HEK293 (cell line): ENCODE measurements at regions of chr6 and their contacts with region 1.

Region 1: DNA sequence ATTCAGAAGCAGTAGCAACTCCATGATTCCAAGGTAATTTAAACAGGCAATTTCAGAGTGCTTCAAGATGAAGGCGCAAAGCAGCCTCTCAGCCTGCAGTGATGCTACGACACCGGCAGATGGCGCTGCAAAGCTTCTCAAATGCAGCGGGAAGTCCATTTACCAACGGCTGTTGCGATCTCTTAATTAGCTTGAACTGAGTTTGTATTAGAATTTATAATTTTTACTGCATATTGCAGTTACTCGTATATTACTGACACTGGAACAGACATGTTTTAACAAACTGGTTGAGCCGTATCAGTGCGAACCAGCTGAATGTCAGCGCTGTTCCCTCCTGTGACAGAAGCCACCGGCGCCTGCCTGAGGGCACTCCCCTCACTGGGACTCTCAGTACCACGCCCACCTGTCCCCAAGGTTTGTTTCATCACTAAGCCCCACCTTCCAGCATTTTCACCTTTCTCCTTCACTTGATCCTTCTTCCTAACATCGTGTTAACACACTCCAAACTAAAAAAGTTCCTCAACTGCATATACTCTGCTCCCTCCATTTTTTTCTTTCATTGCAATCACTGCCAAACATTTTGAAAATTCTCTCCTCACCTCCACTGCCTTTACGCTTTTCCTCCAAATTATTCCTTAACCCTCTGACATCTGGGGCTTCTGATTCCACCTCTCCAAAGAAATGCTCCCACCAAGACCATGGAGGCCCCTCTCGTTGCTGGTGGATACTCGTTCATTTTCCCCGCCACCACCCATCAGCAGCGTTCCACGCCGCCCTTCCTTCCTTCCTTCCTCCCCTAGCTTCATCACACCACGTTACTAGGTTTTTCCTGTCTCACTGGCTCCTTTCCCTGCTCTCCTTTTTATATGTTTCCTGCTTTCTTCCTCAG is 14.5 kb downstream of the GNL1 start:
- H3K4me3 ChIP-seq: peak overlapping the region; percentile 34
- H3K27ac ChIP-seq: no peak overlapping the region
- H3K4me1 ChIP-seq: no peaks in the 10 kb centered on the region
- CTCF ChIP-seq: peak; percentile 79

Region 2: GRCh38 chr6:30263734-30264133 is 278.0 kb before region 1 on chr6:
- CTCF ChIA-PET with region 1: no interaction called
- POLR2A ChIA-PET with region 1: no interaction called
- H3K4me3 ChIP-seq: no peak overlapping the region
- H3K27ac ChIP-seq: no peak overlapping the region
- H3K4me1 ChIP-seq: peaks cover 8% of the 10 kb centered on the region; the same call in 1 of the 2 replicates
- CTCF ChIP-seq: no peak

Region 3: DNA sequence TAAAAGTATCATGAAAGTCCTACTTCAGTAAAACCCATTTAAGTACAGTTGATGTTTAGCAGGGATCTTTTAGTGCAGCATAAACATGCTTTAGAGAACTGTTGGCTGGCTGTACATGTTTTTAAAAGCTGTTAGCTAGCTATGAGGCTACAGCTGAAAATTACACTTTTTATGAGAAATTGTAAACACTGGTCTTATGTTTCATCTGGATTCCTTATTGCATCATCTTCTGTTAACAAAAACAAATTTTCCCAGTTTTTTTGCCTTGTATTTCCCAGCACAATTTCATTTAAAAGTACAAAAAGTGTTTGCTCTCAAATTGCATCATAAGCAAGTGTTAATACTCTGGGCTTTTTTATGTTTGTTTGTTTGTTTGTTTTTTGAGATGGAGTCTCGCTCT is 70.8 kb before region 1 on chr6:
- CTCF ChIA-PET with region 1: interaction called, 11 read pairs
- POLR2A ChIA-PET with region 1: no interaction called
- H3K4me3 ChIP-seq: no peak overlapping the region
- H3K27ac ChIP-seq: no peak overlapping the region
- H3K4me1 ChIP-seq: no peaks in the 10 kb centered on the region
- CTCF ChIP-seq: no peak

Region 4: DNA sequence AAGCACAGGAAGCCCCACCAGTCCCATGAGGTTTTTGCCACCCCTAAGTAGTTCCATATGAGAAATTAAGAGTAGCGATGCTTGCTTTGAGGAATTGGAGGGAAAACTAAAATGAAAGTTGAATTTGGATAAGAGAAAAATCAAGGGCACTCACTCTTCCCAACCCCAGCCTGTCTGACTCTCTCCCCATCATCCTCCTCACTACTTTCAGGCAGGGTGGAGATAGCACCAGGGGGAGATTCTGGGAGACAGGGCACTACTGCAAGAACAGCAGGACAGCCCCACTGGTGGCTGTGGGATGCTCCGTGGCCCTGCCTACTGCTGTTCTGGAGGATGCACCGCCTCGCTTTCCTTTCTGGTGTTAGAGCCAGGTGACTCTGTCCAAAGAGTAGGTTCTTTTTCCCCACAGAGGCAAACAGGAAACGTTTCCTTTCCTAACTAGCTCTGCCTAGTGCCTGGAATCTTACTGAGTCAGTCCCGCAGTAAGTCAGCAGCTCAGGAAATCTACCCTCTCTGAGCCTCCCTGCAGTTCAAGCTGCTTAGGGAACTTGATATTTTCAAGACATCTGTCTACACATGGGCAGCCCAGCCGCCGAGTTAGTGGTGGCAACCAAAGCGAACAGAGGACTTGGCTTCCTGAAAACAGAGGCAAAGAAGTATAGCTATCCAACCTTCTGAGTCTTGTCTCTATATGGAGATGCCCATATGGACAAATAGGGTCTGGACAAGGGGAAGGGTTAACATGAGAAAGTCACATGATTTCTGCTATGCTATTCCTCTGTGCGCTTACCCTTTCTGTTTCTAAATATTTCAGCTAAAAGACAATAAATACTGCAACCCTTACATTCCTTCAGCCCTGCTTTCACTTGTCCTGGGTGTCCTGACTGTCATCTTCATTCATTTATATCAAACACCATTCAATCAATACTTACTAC is 41.1 kb before region 1 on chr6:
- CTCF ChIA-PET with region 1: interaction called, 46 read pairs
- POLR2A ChIA-PET with region 1: no interaction called
- H3K4me3 ChIP-seq: no peak overlapping the region
- H3K27ac ChIP-seq: no peak overlapping the region
- H3K4me1 ChIP-seq: no peaks in the 10 kb centered on the region
- CTCF ChIP-seq: no peak

Region 5: DNA sequence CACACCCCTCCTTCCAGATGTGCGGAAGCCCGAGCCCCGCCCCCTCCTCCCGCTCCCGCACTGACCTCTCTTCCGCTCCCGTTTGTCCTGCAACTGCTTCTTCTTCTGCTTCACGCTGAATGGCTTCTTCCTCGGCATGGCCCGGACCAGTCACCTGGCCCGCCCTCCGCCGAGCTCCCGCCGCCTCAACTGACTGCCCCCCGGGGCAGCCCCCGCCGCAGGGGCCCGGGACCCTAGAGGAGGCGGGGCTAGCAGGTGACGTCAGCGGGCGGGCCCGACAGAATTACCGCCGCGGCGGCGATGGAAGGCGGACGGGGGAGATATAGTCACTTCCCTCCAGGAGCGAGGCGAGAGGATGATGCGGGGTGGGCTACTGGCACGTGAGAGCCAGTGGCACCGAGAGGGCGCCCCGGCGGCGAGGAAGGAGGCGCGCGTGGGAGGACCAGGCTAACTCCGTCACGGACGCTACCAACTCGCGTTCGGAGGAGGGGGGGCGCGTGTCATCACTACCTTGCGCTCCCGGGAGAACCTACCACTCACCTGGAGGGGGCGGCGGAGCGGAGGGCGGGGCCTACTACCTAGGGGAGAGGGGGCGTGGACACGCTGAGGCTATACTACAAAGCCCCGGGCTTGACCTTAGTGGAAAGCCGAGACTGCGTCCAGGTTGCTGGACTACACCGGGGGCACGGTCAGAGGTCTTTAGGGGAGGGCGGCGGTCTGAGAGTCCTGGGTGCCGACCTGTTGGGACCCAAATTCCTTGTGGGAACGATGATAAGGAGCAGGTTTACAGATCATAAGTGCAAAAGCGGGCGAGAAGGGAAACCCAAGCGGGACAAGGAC is 14.5 kb after region 1 on chr6 and contains the start of gene GNL1:
- CTCF ChIA-PET with region 1: interaction called, 175 read pairs
- POLR2A ChIA-PET with region 1: interaction called, 23 read pairs
- H3K4me3 ChIP-seq: peak within 1 kb of the TSS; percentile 86
- H3K27ac ChIP-seq: peak within 1 kb of the TSS; percentile 74
- H3K4me1 ChIP-seq: 0 out of 2 replicates have a peak, but pooled peaks cover 3% of the 10 kb centered on the region
- CTCF ChIP-seq: peak; percentile 62

Region 6: DNA sequence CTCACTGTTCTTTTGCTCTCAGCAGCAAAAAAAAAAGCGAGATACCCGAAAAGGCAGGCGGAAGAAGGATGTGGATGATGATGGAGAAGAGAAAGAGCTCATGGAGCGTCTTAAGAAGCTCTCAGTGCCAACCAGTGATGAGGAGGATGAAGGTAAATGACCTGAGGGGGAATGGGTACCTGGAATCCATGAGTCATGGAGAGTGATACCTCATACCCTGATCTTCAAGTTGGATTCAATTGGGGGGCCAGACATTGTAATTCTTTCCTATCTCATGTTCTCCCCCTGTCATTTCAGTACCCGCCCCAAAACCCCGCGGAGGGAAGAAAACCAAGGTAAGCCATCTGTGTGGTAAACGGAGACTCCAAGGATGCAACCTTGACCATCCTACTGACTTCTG is 36.3 kb after region 1 on chr6:
- CTCF ChIA-PET with region 1: interaction called, 18 read pairs
- POLR2A ChIA-PET with region 1: no interaction called
- H3K4me3 ChIP-seq: no peak overlapping the region
- H3K27ac ChIP-seq: no peak overlapping the region
- H3K4me1 ChIP-seq: peaks cover 5% of the 10 kb centered on the region; the same call in 1 of the 2 replicates
- CTCF ChIP-seq: no peak